Posterior vena cava (tissue), 2 donors: ENCODE measurements at regions of chr17 and their contacts with region 1.

Region 1: GRCh38 chr17:81601525-81602120 is 35.3 kb downstream of the NPLOC4 start:
- DNase-seq: no peak

Region 2: GRCh38 chr17:81253358-81254131 is 348.1 kb before region 1 on chr17:
- intact Hi-C with region 1: loop called (anchors 5 to 10 kb)
- DNase-seq: no peak

Region 3: GRCh38 chr17:81471804-81472456 is 129.7 kb before region 1 on chr17:
- intact Hi-C with region 1: no loop called
- DNase-seq: peak; percentile 93

Region 4: DNA sequence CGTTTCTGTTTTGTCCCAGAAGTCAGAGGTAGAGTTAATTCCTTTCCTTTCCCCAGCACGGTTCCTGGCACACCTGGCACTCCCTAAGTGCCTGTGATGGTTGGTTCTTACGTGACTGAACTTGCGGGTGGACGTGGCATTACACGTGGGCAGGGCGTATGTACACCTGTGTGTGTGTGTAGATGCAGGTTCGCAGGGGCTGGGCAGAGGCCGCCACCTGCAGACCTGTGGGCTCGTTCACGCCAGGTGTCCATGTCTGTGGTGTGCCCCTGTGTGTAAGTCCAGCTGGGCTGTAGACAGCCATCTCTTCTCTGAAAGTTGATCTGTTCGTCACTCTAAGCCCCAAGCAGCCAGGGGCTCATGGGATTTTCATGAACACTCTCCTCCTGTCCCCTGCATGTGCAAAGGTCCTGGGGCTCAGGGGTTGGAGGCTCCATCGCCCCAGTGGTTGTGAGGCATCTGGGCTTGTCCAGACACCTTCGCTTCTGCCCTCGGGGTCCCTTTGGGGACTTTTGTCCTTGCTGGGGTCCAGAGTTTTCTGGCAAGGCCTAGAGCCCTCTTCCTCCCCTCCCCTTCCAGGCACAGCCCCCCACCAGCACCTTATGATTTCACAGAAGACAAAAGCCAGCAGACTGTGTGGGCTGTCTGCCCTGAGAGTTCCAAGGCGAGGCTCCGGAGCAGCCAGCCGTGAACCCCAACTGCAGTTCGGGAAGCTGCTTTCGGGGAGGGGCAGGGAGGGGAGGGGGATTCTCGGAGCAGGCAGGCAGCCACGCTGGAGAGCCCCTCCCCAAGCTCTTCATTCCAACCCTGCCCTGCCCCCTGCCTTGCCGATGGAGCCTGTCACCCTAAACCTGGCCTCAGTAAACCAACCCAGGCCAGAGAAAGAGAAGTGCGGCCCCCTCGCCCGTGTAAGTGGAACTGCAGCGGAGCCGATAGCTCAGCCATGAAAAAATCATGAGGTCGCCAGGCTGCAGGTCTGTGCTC is 78.8 kb before region 1 on chr17:
- intact Hi-C with region 1: loop called in 1 of 2 experiments (anchors 10 kb)
- DNase-seq: no peak

Region 5: DNA sequence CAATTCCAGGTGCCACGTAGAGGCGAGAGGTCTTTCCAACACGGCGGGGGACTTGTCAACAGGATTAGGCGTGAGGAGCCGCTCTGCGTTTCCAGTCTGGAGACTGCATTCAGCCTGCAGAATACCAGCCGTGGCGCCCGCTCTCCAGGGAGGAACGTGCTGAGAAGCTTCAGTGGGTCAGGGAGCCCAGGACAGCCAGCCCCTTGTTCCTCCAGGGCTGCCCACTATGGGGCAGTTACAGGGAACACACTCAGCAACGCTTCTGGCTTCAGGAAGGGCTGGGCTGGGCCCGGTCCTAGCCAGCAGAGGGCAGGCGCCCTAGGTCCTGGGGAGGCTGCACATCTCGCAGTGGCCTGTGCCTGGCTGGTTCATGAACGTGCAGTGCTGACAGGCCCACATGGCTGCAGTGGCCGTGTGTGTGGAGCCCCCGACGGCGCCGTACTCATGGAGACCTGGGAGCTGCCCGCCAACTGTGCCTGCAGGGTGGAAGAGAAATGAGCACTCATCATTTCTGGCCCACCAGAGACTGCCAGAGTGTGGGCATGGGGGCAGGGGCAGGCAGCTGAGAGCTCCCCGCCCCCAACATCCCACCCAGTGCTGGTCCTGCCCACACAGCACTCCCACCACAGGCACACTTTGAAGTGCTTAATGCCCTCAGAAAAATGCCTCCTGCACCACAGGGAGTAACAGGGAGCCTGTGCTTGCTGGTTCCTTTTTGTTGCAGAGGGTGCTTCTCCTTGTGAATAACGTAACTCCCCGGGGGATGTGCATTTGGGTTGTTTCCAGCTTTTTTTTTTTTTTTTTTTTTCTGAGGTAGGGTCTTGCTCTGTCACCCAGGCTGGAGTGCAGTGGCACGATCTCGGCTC is 42.4 kb before region 1 on chr17:
- intact Hi-C with region 1: loop called in 1 of 2 experiments (anchors 5 kb)
- DNase-seq: no peak